Psoas muscle (tissue), 8 donors: ENCODE measurements at regions of chr17 and their contacts with region 1.

Region 1: DNA sequence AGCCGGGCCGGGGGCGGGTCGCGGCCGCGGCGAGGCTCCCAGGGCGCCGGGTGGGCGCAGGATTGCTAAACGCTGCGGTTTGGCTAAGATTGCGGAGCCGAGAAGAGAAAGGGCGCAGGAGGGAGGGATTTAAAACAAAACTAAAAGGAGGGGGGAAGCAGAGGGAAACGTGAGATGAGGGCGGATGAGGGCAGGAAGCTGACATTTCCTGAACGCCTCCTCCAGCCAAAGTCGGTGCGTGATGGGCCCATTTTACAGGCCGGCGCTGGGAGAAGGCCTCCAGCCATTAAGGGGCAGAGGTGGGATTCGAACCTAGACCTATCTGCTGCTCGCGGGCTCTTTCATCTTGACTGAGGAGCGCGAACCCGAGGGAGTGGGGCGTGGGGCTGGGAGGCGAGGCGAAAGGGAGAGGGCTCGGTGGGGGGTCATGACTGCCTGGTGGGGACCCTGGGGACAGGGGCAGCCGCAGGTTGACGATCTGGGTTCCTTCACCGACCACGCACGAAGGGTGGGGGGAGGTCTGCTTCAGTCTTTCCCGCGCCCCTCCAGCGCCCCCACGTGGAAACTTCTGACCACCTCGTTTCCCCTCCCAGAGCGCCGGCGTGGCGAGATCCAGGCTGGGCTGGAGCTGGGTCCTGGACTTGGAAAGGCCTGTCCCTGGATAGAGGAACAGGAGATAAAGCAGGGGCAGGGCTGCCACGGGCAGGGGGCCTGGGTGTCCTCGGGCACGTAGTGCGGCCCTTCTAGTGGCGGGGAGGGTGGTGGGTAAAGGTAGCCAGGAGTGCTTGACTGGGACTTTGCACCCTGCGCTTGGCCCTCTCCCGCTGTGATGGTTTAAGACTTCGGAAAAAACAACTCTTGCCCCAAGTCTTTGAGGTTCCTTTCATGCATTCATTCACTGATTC is 3.8 kb upstream of the TAC4 start:
- DNase-seq: peak; percentile 76 to 87
- ATAC-seq: peak; percentile 72 to 89 (median 79)
- H3K4me3 ChIP-seq: peak overlapping the region; percentile 69
- H3K27ac ChIP-seq: peak overlapping the region; percentile 51
- H3K4me1 ChIP-seq: peaks cover 11% of the 10 kb centered on the region
- H3K27me3 ChIP-seq: no peaks in the 10 kb centered on the region
- CTCF ChIP-seq: peak; percentile 74

Region 2: DNA sequence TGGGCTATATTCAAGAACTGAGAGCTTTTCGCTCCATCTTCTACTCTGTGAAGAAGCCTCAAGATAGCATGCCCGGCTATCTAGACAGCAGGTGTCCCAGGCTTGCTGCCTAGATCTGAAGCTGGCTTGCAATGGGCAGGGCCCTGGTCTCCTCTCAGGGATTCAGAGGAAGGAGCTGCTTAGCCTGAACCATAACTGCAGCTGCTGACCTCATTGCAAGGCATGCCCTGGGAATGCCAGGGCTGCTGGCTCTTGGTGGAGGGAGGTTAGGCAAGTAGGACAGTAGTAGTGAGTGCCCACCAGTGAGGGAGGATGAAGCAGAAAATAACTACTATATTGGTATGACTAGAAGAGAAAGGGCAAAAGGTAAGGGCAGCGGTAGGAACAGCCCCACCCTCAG is 122.6 kb before region 1 on chr17:
- intact Hi-C with region 1: loop called in 1 of 2 experiments (anchors 5 kb)
- DNase-seq: no peak
- ATAC-seq: peak; percentile 58 to 62 (median 59)
- H3K4me3 ChIP-seq: no peak overlapping the region
- H3K27ac ChIP-seq: peak overlapping the region; percentile 43
- H3K4me1 ChIP-seq: peaks cover 26% of the 10 kb centered on the region
- H3K27me3 ChIP-seq: no peaks in the 10 kb centered on the region
- CTCF ChIP-seq: no peak

Region 3: GRCh38 chr17:49809056-49809455 is 42.6 kb before region 1 on chr17:
- intact Hi-C with region 1: no loop called
- DNase-seq: no peak
- ATAC-seq: no peak
- H3K4me3 ChIP-seq: no peak overlapping the region
- H3K27ac ChIP-seq: no peak overlapping the region
- H3K4me1 ChIP-seq: no peaks in the 10 kb centered on the region
- H3K27me3 ChIP-seq: no peaks in the 10 kb centered on the region
- CTCF ChIP-seq: no peak

Region 4: DNA sequence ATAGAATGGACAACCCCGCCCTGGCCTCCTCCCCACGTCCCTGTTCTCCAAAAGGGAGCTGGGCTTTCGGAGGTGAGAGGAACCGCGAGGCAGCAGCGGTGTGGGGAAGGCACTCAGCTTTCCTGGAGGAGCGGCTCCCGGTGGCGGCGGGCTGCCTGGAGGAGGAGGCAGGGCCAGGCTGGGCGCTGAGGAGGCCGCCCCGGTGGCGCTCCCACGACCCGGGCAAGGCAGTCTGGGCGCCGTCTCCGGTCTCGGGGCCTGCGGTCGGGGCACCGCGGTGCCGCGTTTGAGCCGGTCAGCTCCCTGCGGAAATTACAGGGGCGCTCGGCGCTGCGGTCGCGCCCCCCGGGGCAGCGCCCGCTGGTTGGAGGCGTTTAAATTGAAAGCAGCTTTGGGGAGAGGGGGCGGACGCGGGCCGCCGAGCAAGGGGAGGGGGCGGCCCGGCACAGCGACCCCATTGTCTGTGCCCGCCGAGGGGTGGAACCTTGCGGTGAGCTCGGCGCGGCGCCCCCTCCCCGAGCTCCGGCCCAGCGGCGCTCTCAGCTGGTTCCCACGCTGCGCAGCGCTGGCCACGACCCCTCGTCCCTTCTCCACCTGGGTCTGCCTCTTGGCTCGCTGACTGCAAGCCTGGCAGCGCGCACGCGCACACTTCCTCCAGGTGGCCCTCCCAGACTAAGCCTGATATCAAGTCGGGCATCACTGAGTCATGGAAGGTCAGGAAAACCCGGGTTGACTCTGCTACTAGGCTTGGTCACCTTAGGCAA is 58.6 kb after region 1 on chr17:
- intact Hi-C with region 1: no loop called
- DNase-seq: no peak
- ATAC-seq: no peak
- H3K4me3 ChIP-seq: no peak overlapping the region
- H3K27ac ChIP-seq: no peak overlapping the region
- H3K4me1 ChIP-seq: no peaks in the 10 kb centered on the region
- H3K27me3 ChIP-seq: peaks cover 0 to 56% (median 41%) of the 10 kb centered on the region in 3 donors
- CTCF ChIP-seq: no peak

Region 5: GRCh38 chr17:49926886-49927285 is 75.2 kb after region 1 on chr17:
- intact Hi-C with region 1: no loop called
- DNase-seq: peak; percentile 81 to 85
- ATAC-seq: peak in 3 of 4 donors; percentile 59 to 74 (median 66)
- H3K4me3 ChIP-seq: no peak overlapping the region
- H3K27ac ChIP-seq: no peak overlapping the region
- H3K4me1 ChIP-seq: no peaks in the 10 kb centered on the region
- H3K27me3 ChIP-seq: peaks cover 0 to 43% (median 4%) of the 10 kb centered on the region in 3 donors
- CTCF ChIP-seq: no peak